ENCODE measurements at regions of chr9 and their contacts with region 1.

Region 1: GRCh38 chr9:21812946-21813568 is 10.6 kb downstream of the MTAP start:
- DNase-seq: peak; percentile 51
- ATAC-seq: peak; percentile 91
- H3K4me3 ChIP-seq: no peak overlapping the region
- H3K27ac ChIP-seq: no peak overlapping the region
- H3K4me1 ChIP-seq: 0 out of 2 replicates have a peak, but pooled peaks cover 6% of the 10 kb centered on the region
- H3K27me3 ChIP-seq: no peaks in the 10 kb centered on the region
- CTCF ChIP-seq: peak; percentile 94
- EP300 ChIP-seq: no peak
- POLR2A ChIP-seq: no peak
- RAD21 ChIP-seq: peak; percentile 77

Region 2: DNA sequence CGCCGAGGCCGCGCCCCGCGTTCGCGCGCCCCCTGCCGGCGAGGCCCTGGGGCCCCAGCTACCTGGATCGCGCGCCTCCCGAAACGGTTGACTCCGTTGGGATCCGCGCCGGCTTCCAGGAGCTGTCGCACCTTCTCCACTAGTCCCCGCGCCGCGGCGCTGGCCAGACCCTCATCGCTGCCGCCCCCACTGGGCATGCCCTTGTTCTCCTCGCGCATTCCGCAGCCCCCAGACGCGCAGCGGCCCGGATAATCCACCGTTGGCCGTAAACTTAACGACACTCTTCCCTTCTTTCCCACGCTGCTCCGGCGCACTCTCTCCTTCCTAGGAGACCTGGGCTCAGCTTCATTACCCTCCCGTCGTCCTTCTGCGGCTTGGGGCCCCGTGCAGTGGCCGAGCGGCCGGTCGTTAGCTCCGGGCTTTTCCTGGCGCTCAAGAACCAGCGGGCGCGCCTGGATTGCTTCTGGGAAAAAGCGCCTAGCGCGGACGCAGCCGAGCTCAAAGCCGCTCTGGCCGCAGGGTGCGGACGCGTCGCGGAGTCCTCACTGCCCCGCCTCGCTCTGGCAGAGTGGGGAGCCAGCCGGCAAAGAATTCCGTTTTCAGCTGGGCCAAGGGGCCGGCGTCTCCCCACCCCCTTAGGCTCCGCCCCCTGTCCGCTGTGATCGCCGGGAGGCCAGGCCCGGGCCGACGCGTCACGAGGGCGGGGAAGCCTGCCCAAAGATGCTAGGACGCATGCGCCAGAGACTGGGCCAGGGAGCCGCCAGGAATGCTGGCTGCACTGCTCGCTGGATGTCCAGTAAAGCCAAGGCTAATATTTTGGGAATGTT is 195.9 kb after region 1 on chr9 and contains the start of gene CDKN2B:
- CTCF ChIA-PET with region 1: interaction called, 70 read pairs
- POLR2A ChIA-PET with region 1: interaction called, 5 read pairs
- in situ Hi-C with region 1: loop called (anchors 5 kb)
- intact Hi-C with region 1: loop called (anchors 1 kb)
- DNase-seq: peak; percentile 85
- ATAC-seq: peak; percentile 96
- H3K4me3 ChIP-seq: peak within 1 kb of the TSS; percentile 72 to 89 (median 76)
- H3K27ac ChIP-seq: no peak within 1 kb of the TSS
- H3K4me1 ChIP-seq: peaks cover 12% of the 10 kb centered on the region
- H3K27me3 ChIP-seq: no peaks in the 10 kb centered on the region
- CTCF ChIP-seq: peak; percentile 90
- EP300 ChIP-seq: no peak
- POLR2A ChIP-seq: peak; percentile 67 to 71; a peak in 3 of 4 replicates
- RAD21 ChIP-seq: peak; percentile 71
- total RNA-seq, gene CDKN2B: 0.83 and 1.4 TPM in 2 replicates

Region 3: GRCh38 chr9:22119537-22120158 is 306.6 kb after region 1 on chr9:
- CTCF ChIA-PET with region 1: interaction called, 20 read pairs
- POLR2A ChIA-PET with region 1: no interaction called
- in situ Hi-C with region 1: loop called (anchors 10 kb)
- intact Hi-C with region 1: loop called (anchors 1 kb)
- DNase-seq: peak; percentile 21
- ATAC-seq: peak; percentile 74
- H3K4me3 ChIP-seq: no peak overlapping the region
- H3K27ac ChIP-seq: no peak overlapping the region
- H3K4me1 ChIP-seq: peaks cover 17% of the 10 kb centered on the region
- H3K27me3 ChIP-seq: no peaks in the 10 kb centered on the region
- CTCF ChIP-seq: peak; percentile 60
- EP300 ChIP-seq: no peak
- POLR2A ChIP-seq: no peak
- RAD21 ChIP-seq: no peak

Region 4: GRCh38 chr9:22244141-22245011 is 431.3 kb after region 1 on chr9:
- CTCF ChIA-PET with region 1: interaction called, 27 read pairs
- POLR2A ChIA-PET with region 1: no interaction called
- in situ Hi-C with region 1: loop called (anchors 5 kb)
- intact Hi-C with region 1: loop called (anchors 1 kb)
- DNase-seq: peak; percentile 26
- ATAC-seq: peak; percentile 82
- H3K4me3 ChIP-seq: no peak overlapping the region
- H3K27ac ChIP-seq: no peak overlapping the region
- H3K4me1 ChIP-seq: no peaks in the 10 kb centered on the region
- H3K27me3 ChIP-seq: no peaks in the 10 kb centered on the region
- CTCF ChIP-seq: peak; percentile 57
- EP300 ChIP-seq: no peak
- POLR2A ChIP-seq: no peak
- RAD21 ChIP-seq: no peak